ENCODE measurements at regions of chr4 and their contacts with region 1.

Region 1: DNA sequence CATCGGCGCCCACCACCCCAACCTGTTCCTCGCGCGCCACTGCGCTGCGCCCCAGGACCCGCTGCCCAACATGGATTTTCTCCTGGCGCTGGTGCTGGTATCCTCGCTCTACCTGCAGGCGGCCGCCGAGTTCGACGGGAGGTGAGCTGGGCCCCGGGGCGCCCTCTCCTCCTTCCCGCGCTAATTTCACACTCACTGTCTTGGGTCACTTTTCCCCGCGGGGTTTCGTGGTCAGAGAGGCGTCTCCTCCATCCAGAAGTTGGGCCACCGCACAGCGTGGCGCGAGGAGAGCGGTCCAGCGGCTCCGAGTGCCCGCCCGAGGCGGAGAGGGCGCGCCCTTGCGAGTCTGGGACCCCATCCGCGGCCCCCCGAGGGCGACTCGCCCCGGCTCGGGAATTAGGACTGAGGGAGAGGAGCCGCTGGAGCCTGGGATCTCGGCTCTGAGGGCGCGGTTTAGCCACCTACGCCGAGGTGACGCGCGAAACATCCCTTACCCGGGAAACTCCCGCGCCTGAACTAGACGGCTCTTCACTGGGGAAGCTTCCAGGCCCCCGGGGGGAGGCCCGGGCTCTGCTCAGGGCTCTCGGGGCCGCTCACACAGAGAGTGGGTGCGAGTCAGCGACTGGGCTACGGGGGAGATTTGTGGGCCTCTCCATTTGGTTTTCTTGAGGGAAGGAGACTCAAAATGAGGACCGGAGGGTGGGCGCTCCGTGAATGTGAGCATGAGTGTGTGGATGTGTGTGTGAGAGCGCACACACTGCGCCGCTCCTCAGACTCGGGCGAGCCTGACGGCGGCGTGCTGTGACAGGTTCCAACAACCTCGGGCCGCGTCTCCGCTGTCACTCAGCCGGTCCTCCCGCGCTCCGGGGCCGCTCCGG is 551 bp downstream of the NPNT start:
- DNase-seq: no peak
- ATAC-seq: peak; percentile 78
- H3K4me3 ChIP-seq: peak overlapping the region; percentile 58 to 75 (median 65)
- H3K27ac ChIP-seq: no peak overlapping the region
- H3K4me1 ChIP-seq: peaks cover 44% of the 10 kb centered on the region
- H3K27me3 ChIP-seq: peaks cover 0 to 34% of the 10 kb centered on the region in 2 experiments; a peak in 2 of 5 replicates
- CTCF ChIP-seq: 0 out of 2 replicates have a peak, but pooled peaks have one; percentile 17
- EP300 ChIP-seq: no peak
- POLR2A ChIP-seq: no peak
- RAD21 ChIP-seq: no peak

Region 2: DNA sequence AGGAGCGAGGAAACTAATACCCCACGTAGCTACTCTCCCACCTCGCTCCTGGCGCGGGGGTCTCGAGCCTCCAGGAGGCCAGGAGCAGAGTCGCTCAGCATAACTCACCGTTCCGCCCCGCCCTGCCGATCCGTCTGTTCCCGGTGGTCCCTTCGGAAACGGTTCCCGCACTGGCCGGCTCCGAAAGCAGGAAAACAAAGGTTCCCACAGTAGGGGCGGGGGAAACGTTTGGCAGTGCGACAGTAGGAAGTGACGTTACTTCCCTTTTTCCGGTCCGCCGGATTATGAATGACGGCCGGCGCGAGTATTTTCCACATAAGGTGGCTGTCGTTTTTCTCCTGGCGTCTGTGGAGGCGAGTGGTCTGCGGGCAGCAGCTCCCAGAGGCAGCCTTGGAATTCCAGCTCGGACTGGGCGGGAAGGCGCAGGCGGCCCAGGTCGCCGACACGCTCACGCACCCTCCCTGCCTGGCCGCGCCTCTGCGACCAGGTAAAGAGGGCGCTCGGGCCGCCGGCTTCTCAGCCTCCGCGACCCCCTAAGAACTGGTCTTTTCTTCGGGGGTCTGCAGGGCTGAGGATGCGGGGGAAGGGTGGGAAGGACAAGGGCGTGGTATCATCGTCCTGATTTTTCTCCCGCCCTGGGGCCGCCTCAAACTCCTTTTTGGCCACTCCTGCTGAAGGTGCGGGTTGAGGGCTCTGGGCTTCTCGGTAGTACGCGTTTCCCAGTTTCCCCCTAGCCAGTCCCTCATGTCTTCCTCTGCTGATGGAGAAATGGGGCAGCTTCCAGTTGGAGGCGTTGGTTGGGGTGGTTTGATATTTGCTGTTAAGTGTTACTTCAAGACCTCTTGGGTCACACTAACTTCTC is 187.1 kb before region 1 on chr4 and contains the starts of genes GSTCD and INTS12:
- CTCF ChIA-PET with region 1: no interaction called
- POLR2A ChIA-PET with region 1: no interaction called
- in situ Hi-C with region 1: no loop called
- intact Hi-C with region 1: loop called (anchors 10 kb)
- DNase-seq: peak; percentile 82
- ATAC-seq: peak; percentile 93
- H3K4me3 ChIP-seq: peak within 1 kb of the TSS; percentile 80 to 98 (median 82)
- H3K27ac ChIP-seq: peak within 1 kb of the TSS; percentile 90
- H3K4me1 ChIP-seq: peaks cover 40% of the 10 kb centered on the region
- H3K27me3 ChIP-seq: no peaks in the 10 kb centered on the region; a peak in 1 of 5 replicates
- CTCF ChIP-seq: peak; percentile 42; the same call in 1 of the 2 replicates
- EP300 ChIP-seq: peak; percentile 79 to 91; a peak in 3 of 4 replicates
- POLR2A ChIP-seq: peak; percentile 90 to 91
- RAD21 ChIP-seq: peak; percentile 50; the same call in 1 of the 2 replicates
- total RNA-seq, gene GSTCD: 30.8 and 38.7 TPM in 2 replicates
- total RNA-seq, gene INTS12: 21.1 and 22.9 TPM in 2 replicates

Region 3: DNA sequence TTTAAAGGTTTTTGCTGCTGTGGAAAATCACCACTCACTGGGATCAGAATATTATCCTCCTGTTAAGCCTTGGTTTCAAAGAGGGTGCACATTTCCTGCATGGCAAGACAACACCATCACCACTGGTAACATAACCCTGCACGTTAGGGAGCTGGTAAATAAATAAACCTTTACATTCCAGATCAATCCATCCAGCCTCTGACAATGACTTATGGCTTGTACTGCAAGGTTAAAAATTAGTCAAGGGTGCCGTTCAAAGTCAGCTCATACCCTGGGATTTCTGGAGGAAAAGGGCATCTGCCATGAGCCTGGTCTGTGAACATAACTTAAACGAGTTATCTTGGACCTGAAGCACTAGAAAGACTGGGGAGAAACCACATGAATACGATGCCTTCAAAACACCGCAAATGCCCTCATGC is 102.4 kb after region 1 on chr4:
- CTCF ChIA-PET with region 1: no interaction called
- POLR2A ChIA-PET with region 1: no interaction called
- in situ Hi-C with region 1: no loop called
- intact Hi-C with region 1: loop called (anchors 2 kb)
- DNase-seq: peak; percentile 89
- ATAC-seq: peak; percentile 99
- H3K4me3 ChIP-seq: no peak overlapping the region; a peak in 2 of 6 replicates
- H3K27ac ChIP-seq: peak overlapping the region; percentile 58
- H3K4me1 ChIP-seq: peaks cover 45% of the 10 kb centered on the region
- H3K27me3 ChIP-seq: no peaks in the 10 kb centered on the region
- CTCF ChIP-seq: no peak
- EP300 ChIP-seq: peak in 1 of 2 experiments; percentile 67; a peak in 1 of 4 replicates
- POLR2A ChIP-seq: no peak
- RAD21 ChIP-seq: no peak

Region 4: DNA sequence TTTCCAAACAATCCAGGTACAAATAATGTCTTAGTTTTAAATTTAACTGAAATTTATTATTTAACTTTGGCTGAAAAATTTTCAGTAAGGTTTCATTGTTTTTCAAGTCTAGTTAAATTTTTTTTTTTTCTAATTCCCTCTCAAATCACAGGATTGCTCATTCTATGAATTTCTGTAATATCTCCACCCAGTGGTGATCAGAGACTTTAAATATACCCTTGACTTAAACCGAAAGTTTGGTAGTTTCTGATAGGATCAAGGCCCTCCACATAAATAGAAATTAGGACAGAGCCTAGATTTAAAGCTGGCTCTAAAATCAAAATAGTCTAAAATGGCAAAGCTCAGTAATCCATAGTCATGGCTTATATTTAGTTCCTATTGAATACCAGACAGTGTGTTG is 244.8 kb after region 1 on chr4:
- CTCF ChIA-PET with region 1: no interaction called
- POLR2A ChIA-PET with region 1: no interaction called
- in situ Hi-C with region 1: no loop called
- intact Hi-C with region 1: loop called (anchors 5 kb)
- DNase-seq: no peak
- ATAC-seq: no peak
- H3K4me3 ChIP-seq: no peak overlapping the region
- H3K27ac ChIP-seq: no peak overlapping the region
- H3K4me1 ChIP-seq: no peaks in the 10 kb centered on the region
- H3K27me3 ChIP-seq: no peaks in the 10 kb centered on the region
- CTCF ChIP-seq: no peak
- EP300 ChIP-seq: no peak
- POLR2A ChIP-seq: no peak
- RAD21 ChIP-seq: no peak

Region 5: GRCh38 chr4:106201373-106201772 is 305.6 kb after region 1 on chr4:
- CTCF ChIA-PET with region 1: no interaction called
- POLR2A ChIA-PET with region 1: no interaction called
- in situ Hi-C with region 1: no loop called
- intact Hi-C with region 1: loop called (anchors 10 kb)
- DNase-seq: peak; percentile 7
- ATAC-seq: peak; percentile 66; the same call in 2 of the 3 replicates
- H3K4me3 ChIP-seq: no peak overlapping the region
- H3K27ac ChIP-seq: no peak overlapping the region
- H3K4me1 ChIP-seq: no peaks in the 10 kb centered on the region
- H3K27me3 ChIP-seq: no peaks in the 10 kb centered on the region
- CTCF ChIP-seq: peak; percentile 56
- EP300 ChIP-seq: no peak
- POLR2A ChIP-seq: no peak
- RAD21 ChIP-seq: no peak

Measured in HepG2 (cell line).